Common myeloid progenitor, CD34-positive (primary cell): ENCODE measurements at regions of chr6 and their contacts with region 1.

Region 1: GRCh38 chr6:40999569-40999968 is 39.5 kb downstream of the UNC5CL start:
- DNase-seq: peak; percentile 75 to 87 (median 86)
- H3K4me3 ChIP-seq: no peak overlapping the region
- H3K27ac ChIP-seq: no peak overlapping the region
- H3K4me1 ChIP-seq: no peaks in the 10 kb centered on the region
- H3K27me3 ChIP-seq: peaks cover 0 to 10% (median 0%) of the 10 kb centered on the region in 5 experiments

Region 2: DNA sequence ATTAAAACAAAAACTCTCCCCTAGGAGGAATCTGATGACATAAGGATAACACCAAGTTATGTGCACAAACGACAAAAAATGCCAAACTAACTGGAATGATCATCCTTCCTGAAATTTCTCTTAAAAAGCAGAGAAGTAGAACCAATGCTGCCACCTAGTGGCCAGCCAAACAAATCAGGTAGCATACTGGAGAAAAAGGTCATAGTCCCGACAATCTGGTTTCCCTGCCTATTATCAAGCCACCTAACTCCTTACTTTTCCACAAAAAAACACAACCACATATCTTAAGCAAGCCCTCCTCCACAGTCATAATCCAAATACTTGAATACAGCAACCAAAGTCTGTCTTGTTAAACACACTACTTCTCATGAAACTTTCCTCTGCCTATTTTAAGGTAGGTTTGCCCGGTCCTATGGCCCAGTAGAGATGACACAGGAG is 67.3 kb after region 1 on chr6:
- CTCF ChIA-PET with region 1: interaction called, 12 read pairs
- POLR2A ChIA-PET with region 1: interaction called, 3 read pairs
- DNase-seq: peak; percentile 77 to 85 (median 79)
- H3K4me3 ChIP-seq: no peak overlapping the region
- H3K27ac ChIP-seq: no peak overlapping the region
- H3K4me1 ChIP-seq: peaks cover 6 to 19% (median 10%) of the 10 kb centered on the region in 4 experiments
- H3K27me3 ChIP-seq: no peaks in the 10 kb centered on the region

Region 3: DNA sequence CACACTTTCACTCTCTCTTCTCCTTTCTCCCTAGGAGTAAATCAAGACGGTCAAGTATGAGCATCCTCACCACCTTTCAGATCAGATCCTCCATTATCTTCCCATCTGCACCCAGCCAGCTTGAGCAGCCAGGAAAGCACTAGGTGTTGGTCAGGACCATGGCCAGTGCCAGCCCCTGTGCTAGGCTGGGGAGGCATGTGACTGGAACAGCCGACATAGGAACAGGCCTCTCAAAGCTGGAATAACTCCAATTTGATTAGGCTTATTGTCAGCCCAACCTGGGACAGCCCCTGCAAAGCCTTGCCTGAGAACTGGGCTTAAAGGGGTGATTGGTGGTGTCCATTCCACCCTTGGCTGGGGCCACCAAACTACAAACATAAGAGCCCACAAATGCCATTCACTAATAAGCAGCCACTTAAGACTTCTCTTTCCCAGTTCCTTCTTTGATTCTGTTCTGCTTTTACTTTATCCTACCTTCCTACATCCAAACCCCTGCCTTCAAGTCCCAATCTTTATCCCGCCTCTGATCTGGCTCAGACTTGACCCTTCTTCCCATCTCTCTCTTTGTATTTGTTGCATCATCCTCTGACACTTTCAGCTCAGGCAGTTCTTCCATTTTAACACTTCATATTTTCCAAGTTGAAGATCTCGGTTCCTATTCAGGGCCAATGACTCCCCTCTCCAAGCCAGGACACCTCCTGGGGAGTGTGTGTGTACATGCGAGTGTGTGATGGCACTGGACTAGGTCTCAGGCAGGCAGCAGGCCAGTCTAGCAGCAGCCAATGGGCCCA is 167.8 kb after region 1 on chr6:
- CTCF ChIA-PET with region 1: no interaction called
- POLR2A ChIA-PET with region 1: no interaction called
- DNase-seq: peak in 2 of 3 donors; percentile 16 to 29
- H3K4me3 ChIP-seq: no peak overlapping the region
- H3K27ac ChIP-seq: no peak overlapping the region
- H3K4me1 ChIP-seq: peaks cover 0 to 3% (median 1%) of the 10 kb centered on the region in 4 experiments
- H3K27me3 ChIP-seq: peaks cover 0 to 2% (median 0%) of the 10 kb centered on the region in 5 experiments